ENCODE measurements at regions of chr7 and their contacts with region 1.

Region 1: GRCh38 chr7:29921404-29922010 is 68.1 kb downstream of the SCRN1 start:
- DNase-seq: peak; percentile 76
- H3K4me3 ChIP-seq: no peak overlapping the region
- H3K27ac ChIP-seq: no peak overlapping the region
- H3K4me1 ChIP-seq: no peaks in the 10 kb centered on the region
- H3K27me3 ChIP-seq: no peaks in the 10 kb centered on the region
- CTCF ChIP-seq: peak; percentile 84 to 89
- POLR2A ChIP-seq: no peak

Region 2: DNA sequence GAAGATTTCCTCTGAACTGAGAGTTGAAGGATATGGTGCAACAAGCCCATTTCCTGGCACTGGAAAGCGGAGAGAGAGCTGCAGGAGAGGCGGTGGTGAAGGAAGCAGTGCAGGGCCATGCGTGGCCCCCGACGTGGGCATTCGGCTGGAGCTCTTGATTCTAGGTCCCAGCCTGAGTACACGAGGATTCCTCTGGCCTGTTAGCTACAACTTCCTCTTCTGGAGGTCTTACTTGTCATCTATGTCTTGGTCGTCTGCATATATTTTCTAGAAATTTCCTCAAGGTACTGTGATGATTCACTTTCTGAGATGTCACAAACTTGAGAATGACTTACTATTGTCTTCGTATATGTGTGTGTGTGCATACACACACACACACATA is 1681.7 kb before region 1 on chr7:
- CTCF ChIA-PET with region 1: no interaction called
- POLR2A ChIA-PET with region 1: no interaction called
- dilution Hi-C with region 1: no loop called
- intact Hi-C with region 1: no loop called
- DNase-seq: no peak
- H3K4me3 ChIP-seq: no peak overlapping the region
- H3K27ac ChIP-seq: no peak overlapping the region
- H3K4me1 ChIP-seq: peaks cover 6% of the 10 kb centered on the region
- H3K27me3 ChIP-seq: peaks cover 0 to 2% of the 10 kb centered on the region in 2 experiments
- CTCF ChIP-seq: no peak
- POLR2A ChIP-seq: no peak

Region 3: DNA sequence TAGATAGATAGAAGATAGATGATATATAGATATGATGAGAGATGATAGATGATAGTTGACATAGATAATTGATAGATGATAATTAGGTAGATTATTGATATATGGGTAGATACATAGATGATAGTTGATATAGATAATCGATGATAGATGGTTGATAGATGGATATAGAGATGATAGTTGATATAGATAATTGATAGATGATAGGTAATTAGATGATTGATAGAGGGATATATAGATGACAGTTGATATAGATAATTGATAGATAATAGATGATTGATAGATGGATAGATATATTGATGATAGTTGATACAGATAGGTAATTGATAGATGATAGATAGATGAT is 285.5 kb before region 1 on chr7:
- CTCF ChIA-PET with region 1: interaction called, 90 read pairs
- POLR2A ChIA-PET with region 1: no interaction called
- dilution Hi-C with region 1: no loop called
- intact Hi-C with region 1: loop called (anchors 1 kb)
- DNase-seq: no peak
- H3K4me3 ChIP-seq: no peak overlapping the region
- H3K27ac ChIP-seq: no peak overlapping the region
- H3K4me1 ChIP-seq: no peaks in the 10 kb centered on the region
- H3K27me3 ChIP-seq: no peaks in the 10 kb centered on the region
- CTCF ChIP-seq: no peak
- POLR2A ChIP-seq: no peak

Region 4: DNA sequence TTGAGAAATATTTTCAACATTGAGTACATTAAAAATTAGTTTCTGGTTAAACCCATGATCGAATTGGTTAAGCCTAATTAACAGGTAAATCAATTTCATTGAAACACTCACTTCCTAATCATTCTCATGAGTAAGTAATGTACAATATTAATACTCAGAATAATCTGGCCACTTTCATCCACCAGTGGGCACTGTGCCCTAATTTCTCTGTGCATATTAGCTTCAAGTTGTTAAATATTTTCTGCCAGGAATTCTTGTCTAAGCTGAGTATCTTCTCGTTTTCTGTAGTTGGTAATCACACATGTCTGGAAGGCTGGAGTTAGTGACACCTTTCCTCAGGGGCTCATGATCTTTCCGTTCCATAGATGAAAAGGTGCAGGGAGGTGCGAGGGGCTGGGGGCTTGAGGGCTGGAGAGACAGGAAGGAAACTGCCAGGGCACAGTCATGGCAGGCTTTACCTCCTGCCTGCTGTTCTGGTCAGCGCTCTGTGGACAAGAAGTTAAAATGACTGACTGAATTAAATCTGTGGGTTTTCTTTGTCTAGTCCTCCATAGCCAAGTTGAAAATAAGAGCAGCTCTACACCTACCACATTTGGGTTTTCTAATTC is 43.3 kb before region 1 on chr7:
- CTCF ChIA-PET with region 1: interaction called, 88 read pairs
- POLR2A ChIA-PET with region 1: no interaction called
- dilution Hi-C with region 1: no loop called
- intact Hi-C with region 1: loop called (anchors 1 kb)
- DNase-seq: peak; percentile 74
- H3K4me3 ChIP-seq: no peak overlapping the region
- H3K27ac ChIP-seq: no peak overlapping the region
- H3K4me1 ChIP-seq: peaks cover 2% of the 10 kb centered on the region
- H3K27me3 ChIP-seq: peaks cover 5% of the 10 kb centered on the region in 2 experiments
- CTCF ChIP-seq: peak; percentile 50 to 58
- POLR2A ChIP-seq: no peak

Region 5: GRCh38 chr7:29935111-29935510 is 13.6 kb after region 1 on chr7:
- CTCF ChIA-PET with region 1: interaction called, 21 read pairs
- POLR2A ChIA-PET with region 1: no interaction called
- dilution Hi-C with region 1: no loop called
- intact Hi-C with region 1: no loop called
- DNase-seq: no peak
- H3K4me3 ChIP-seq: no peak overlapping the region
- H3K27ac ChIP-seq: no peak overlapping the region
- H3K4me1 ChIP-seq: no peaks in the 10 kb centered on the region
- H3K27me3 ChIP-seq: no peaks in the 10 kb centered on the region
- CTCF ChIP-seq: no peak
- POLR2A ChIP-seq: no peak

Region 6: GRCh38 chr7:30074422-30075030 is 153.0 kb after region 1 on chr7:
- CTCF ChIA-PET with region 1: interaction called, 15 read pairs
- POLR2A ChIA-PET with region 1: no interaction called
- dilution Hi-C with region 1: no loop called
- intact Hi-C with region 1: no loop called
- DNase-seq: peak; percentile 52
- H3K4me3 ChIP-seq: no peak overlapping the region
- H3K27ac ChIP-seq: no peak overlapping the region
- H3K4me1 ChIP-seq: no peaks in the 10 kb centered on the region
- H3K27me3 ChIP-seq: no peaks in the 10 kb centered on the region
- CTCF ChIP-seq: peak; percentile 25 to 38
- POLR2A ChIP-seq: no peak

Region 7: DNA sequence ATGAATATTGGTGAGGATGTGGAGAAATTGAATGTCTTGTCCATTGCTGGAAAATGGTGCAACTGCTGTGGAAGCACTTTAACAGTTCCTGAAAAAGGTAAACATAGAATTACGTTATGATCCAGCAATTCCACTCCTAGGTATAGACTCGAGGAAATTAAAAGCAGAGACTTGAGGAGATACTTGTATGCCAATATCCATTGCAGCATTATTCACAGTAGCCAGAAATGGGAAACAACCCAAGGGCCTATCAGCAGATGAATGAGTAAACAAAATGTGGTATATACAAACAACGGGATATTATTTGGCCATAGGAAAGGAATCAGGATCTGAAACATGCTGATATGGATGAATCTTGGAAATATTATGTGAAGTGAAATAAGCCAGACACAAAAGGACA is 180.8 kb after region 1 on chr7:
- CTCF ChIA-PET with region 1: no interaction called
- POLR2A ChIA-PET with region 1: no interaction called
- dilution Hi-C with region 1: no loop called
- intact Hi-C with region 1: no loop called
- DNase-seq: no peak
- H3K4me3 ChIP-seq: no peak overlapping the region
- H3K27ac ChIP-seq: no peak overlapping the region
- H3K4me1 ChIP-seq: no peaks in the 10 kb centered on the region
- H3K27me3 ChIP-seq: no peaks in the 10 kb centered on the region
- CTCF ChIP-seq: no peak
- POLR2A ChIP-seq: no peak

Region 8: GRCh38 chr7:30478349-30479201 is 557.1 kb after region 1 on chr7 and contains the start of gene NOD1:
- CTCF ChIA-PET with region 1: no interaction called
- POLR2A ChIA-PET with region 1: no interaction called
- dilution Hi-C with region 1: no loop called
- intact Hi-C with region 1: no loop called
- DNase-seq: peak; percentile 81
- H3K4me3 ChIP-seq: peak within 1 kb of the TSS; percentile 60 to 92 (median 79)
- H3K27ac ChIP-seq: peak within 1 kb of the TSS; percentile 99
- H3K4me1 ChIP-seq: peaks cover 38% of the 10 kb centered on the region
- H3K27me3 ChIP-seq: no peaks in the 10 kb centered on the region
- CTCF ChIP-seq: no peak
- POLR2A ChIP-seq: no peak
- total RNA-seq, gene NOD1: 39.2 and 39.7 TPM in 2 replicates

Region 9: GRCh38 chr7:30556840-30557239 is 635.3 kb after region 1 on chr7:
- CTCF ChIA-PET with region 1: no interaction called
- POLR2A ChIA-PET with region 1: no interaction called
- dilution Hi-C with region 1: no loop called
- intact Hi-C with region 1: no loop called
- DNase-seq: no peak
- H3K4me3 ChIP-seq: no peak overlapping the region
- H3K27ac ChIP-seq: no peak overlapping the region
- H3K4me1 ChIP-seq: peaks cover 21% of the 10 kb centered on the region
- H3K27me3 ChIP-seq: no peaks in the 10 kb centered on the region
- CTCF ChIP-seq: no peak
- POLR2A ChIP-seq: no peak